Activated CD4-positive, alpha-beta T cell treated with anti-CD3 and anti-CD28 coated beads for 36 hours (primary cell): ENCODE measurements at regions of chr1 and their contacts with region 1.

Region 1: GRCh38 chr1:19209990-19210771 is at the start of gene UBR4:
- DNase-seq: peak; percentile 99
- ATAC-seq: peak; percentile 90
- H3K4me3 Mint-ChIP-seq: peak within 1 kb of the TSS; percentile 87
- H3K27ac Mint-ChIP-seq: peak within 1 kb of the TSS; percentile 97
- H3K4me1 Mint-ChIP-seq: peaks cover 68% of the 10 kb centered on the region
- H3K27me3 Mint-ChIP-seq: no peaks in the 10 kb centered on the region
- total RNA-seq, gene UBR4: 117 to 147 TPM

Region 2: DNA sequence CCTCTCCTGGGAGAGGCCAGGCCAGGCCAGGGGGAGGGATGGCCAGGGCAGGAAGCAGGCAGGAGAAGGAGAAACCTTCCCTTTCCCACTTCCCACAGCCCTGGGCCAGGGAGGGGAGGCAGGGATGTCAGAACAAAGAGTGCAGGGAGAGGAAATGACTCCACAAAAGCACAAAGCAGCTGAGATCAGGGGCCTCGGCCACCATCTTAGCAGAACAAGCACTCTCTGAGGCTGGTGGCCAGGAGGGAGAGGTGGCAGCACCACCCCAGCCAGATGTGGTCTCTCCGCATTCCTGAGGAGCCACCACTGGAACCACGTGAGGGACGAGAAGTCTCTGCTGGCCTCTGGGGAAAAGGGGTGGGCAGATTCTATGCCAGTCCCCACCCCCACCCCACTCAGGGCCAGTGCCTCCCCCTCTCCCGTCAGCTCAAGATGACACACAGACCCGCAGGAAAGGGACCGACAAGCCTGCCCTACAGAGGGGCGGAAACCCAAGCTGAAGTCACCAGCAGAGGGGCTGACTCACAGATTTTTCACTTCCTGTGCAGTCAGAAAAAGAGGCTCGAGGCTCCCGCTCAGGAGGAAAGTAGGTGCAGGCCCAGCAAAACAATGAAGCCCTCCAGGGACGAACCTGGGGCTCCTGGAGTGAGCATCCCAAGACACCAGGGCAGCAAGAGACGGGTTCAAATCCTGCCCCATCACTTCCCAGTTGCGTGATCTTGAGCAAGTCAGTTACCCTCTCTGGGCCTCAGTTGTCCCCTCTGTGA is 283.7 kb before region 1 on chr1:
- CTCF ChIA-PET with region 1: no interaction called
- POLR2A ChIA-PET with region 1: interaction called, 3 read pairs
- intact Hi-C with region 1: loop called in 1 of 2 experiments (anchors 1 kb)
- DNase-seq: peak; percentile 94
- ATAC-seq: peak; percentile 89
- H3K4me3 Mint-ChIP-seq: peak overlapping the region; percentile 69
- H3K27ac Mint-ChIP-seq: peak overlapping the region; percentile 99
- H3K4me1 Mint-ChIP-seq: peaks cover 92% of the 10 kb centered on the region
- H3K27me3 Mint-ChIP-seq: no peaks in the 10 kb centered on the region

Region 3: GRCh38 chr1:19003371-19004290 is 206.6 kb before region 1 on chr1:
- CTCF ChIA-PET with region 1: no interaction called
- POLR2A ChIA-PET with region 1: no interaction called
- intact Hi-C with region 1: loop called in 1 of 2 experiments (anchors 5 kb)
- DNase-seq: peak; percentile 58
- ATAC-seq: peak; percentile 96
- H3K4me3 Mint-ChIP-seq: peak overlapping the region; percentile 33
- H3K27ac Mint-ChIP-seq: peak overlapping the region; percentile 91
- H3K4me1 Mint-ChIP-seq: peaks cover 35% of the 10 kb centered on the region
- H3K27me3 Mint-ChIP-seq: peaks cover 8% of the 10 kb centered on the region

Region 4: GRCh38 chr1:19169642-19170041 is 40.5 kb before region 1 on chr1:
- CTCF ChIA-PET with region 1: interaction called, 4 read pairs
- POLR2A ChIA-PET with region 1: no interaction called
- intact Hi-C with region 1: loop called (anchors 1 to 5 kb)
- DNase-seq: no peak
- ATAC-seq: peak; percentile 95
- H3K4me3 Mint-ChIP-seq: no peak overlapping the region
- H3K27ac Mint-ChIP-seq: peak overlapping the region; percentile 96
- H3K4me1 Mint-ChIP-seq: peaks cover 22% of the 10 kb centered on the region
- H3K27me3 Mint-ChIP-seq: no peaks in the 10 kb centered on the region

Region 5: GRCh38 chr1:19186001-19186400 is 24.2 kb before region 1 on chr1:
- CTCF ChIA-PET with region 1: interaction called, 7 read pairs
- POLR2A ChIA-PET with region 1: interaction called, 3 read pairs
- intact Hi-C with region 1: loop called (anchors 1 to 2 kb)
- DNase-seq: peak; percentile 29
- ATAC-seq: peak; percentile 96
- H3K4me3 Mint-ChIP-seq: no peak overlapping the region
- H3K27ac Mint-ChIP-seq: peak overlapping the region; percentile 89
- H3K4me1 Mint-ChIP-seq: peaks cover 37% of the 10 kb centered on the region
- H3K27me3 Mint-ChIP-seq: no peaks in the 10 kb centered on the region

Region 6: DNA sequence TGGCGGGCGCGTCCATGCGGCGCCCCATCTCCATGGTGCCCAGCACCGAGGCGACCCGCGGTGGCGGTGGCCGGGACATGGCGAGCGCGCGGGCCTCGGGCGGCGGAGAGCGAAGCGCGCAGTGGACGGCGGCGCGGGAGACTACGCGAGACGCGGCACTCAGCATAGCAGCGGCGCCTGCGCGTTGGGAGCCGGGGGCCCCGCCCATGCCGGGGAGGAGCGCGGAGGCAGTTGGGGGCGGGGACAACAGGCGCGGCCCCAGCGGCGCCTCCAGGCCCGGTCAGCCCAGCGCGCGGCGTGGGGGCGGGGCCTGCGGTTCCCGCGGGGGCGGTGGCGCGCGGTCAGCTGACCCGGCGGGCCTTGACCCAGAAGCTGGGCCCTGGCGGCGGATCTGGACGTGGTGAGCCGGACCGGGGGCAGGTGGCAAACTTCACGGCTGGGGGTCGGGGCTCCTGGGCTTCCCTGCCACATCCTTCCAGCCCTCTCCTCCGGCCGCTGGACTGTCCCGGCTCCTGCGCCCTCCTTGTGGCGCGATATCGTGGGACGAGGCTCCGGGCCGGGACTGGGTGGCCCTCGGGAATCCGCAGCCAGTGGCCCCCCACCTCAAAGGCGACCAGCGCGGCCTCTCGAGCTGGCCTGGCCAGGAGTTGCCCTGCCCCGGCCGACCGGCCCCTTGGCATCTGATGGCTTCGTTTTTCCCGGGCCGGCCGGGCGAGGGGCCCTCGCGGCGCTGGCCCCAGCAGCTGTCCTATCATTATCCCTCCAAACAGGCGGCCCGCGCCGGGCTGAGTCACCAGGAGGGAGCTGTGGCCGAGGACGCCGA is 102.0 kb after region 1 on chr1 and contains the starts of genes AKR7A2 and SLC66A1:
- CTCF ChIA-PET with region 1: no interaction called
- POLR2A ChIA-PET with region 1: no interaction called
- intact Hi-C with region 1: loop called in 1 of 2 experiments (anchors 1 kb)
- DNase-seq: peak; percentile 95
- ATAC-seq: peak; percentile 97
- H3K4me3 Mint-ChIP-seq: peak within 1 kb of the TSS; percentile 78
- H3K27ac Mint-ChIP-seq: peak within 1 kb of the TSS; percentile 61
- H3K4me1 Mint-ChIP-seq: peaks cover 23% of the 10 kb centered on the region
- H3K27me3 Mint-ChIP-seq: no peaks in the 10 kb centered on the region
- total RNA-seq, gene AKR7A2: 41.3 to 43.0 TPM
- total RNA-seq, gene SLC66A1: 5.9 to 6.5 TPM

Region 7: DNA sequence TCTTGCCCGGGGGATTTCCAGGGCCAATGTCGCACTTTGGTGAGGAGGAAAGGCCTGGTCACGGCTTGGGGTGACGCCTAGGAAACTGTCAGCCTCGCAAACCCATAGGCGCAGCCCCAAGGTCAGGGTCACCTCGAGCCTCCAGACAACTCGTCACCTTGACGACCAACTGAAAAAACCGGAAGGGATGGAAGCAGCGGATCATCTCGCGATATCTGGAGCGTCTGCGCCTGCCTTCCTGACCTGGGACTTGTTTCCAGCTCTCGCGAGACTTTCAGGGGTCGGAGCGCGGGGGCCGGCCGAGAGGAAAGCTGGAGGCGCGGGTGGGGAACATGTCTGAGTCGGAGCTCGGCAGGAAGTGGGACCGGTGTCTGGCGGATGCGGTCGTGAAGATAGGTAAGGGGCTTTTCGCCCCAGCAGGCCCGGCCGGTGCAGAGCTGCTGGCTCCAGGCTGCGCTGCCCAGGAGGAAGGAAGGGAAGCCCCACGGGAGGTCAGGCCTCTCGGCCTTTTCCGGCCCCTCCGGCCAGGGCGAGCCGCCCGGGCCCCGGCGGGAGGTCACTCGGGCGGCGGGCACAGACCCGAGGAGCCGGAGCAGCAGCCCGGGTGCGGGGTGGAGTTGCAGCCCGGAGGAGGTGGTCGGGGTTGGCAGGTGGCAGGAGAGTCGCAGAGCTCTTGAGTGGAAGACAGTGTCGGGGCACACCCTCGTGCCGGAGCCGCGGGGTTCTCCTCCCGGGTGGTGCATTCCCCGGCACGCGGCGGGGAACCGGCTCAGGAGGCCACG is 386.7 kb after region 1 on chr1:
- CTCF ChIA-PET with region 1: no interaction called
- POLR2A ChIA-PET with region 1: no interaction called
- intact Hi-C with region 1: loop called in 1 of 2 experiments (anchors 1 kb)
- DNase-seq: peak; percentile 98
- ATAC-seq: peak; percentile 86
- H3K4me3 Mint-ChIP-seq: peak overlapping the region; percentile 100
- H3K27ac Mint-ChIP-seq: peak overlapping the region; percentile 99
- H3K4me1 Mint-ChIP-seq: peaks cover 44% of the 10 kb centered on the region
- H3K27me3 Mint-ChIP-seq: no peaks in the 10 kb centered on the region